Psoas muscle (tissue), 8 donors: ENCODE measurements at regions of chr10 and their contacts with region 1.

Region 1: GRCh38 chr10:80382989-80383388 is 25.4 kb upstream of the PRXL2A start:
- DNase-seq: peak in 1 of 2 donors; percentile 22
- ATAC-seq: peak in 1 of 4 donors; percentile 53
- H3K4me3 ChIP-seq: no peak overlapping the region
- H3K27ac ChIP-seq: no peak overlapping the region
- H3K4me1 ChIP-seq: no peaks in the 10 kb centered on the region
- H3K27me3 ChIP-seq: no peaks in the 10 kb centered on the region
- CTCF ChIP-seq: peak; percentile 70

Region 2: GRCh38 chr10:79984851-79985250 is 398.1 kb before region 1 on chr10:
- intact Hi-C with region 1: no loop called
- DNase-seq: no peak
- ATAC-seq: no peak
- H3K4me3 ChIP-seq: no peak overlapping the region
- H3K27ac ChIP-seq: no peak overlapping the region
- H3K4me1 ChIP-seq: peaks cover 7% of the 10 kb centered on the region
- H3K27me3 ChIP-seq: peaks cover 0 to 21% (median 2%) of the 10 kb centered on the region in 3 donors
- CTCF ChIP-seq: no peak

Region 3: DNA sequence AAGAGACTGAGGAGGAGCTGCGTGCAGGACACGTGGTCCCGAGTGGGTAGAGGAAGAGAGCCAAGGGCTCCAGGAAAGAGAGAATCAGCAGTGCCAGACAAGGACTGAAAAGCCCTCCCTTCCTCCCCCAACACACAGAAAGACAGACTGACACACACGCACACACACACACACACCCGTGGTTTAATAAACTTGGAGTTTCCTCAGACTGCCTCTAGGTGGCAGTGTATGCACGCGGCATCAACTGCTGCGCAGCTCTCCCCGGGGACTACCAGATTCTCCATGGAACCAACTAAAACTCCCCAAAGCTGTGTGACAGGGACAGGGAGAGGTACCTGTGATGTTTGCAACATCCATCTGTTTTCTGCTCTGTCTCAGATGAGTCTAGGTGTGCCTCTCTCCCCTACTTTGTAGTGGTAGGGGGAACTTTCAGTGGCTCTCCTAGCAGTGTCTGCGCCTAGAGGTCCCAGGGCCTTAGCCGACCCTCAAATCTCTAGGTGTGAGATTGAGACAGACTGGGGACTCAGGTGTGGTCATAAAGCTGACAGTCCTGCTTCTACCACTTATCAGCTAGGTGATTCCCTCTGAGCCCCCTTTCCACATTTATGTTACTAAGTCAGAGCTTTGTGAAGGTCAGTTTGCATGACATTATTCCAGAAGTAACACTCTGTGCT is 61.8 kb after region 1 on chr10:
- intact Hi-C with region 1: loop called (anchors 5 kb)
- DNase-seq: peak; percentile 67 to 77
- ATAC-seq: peak; percentile 90 to 98 (median 94)
- H3K4me3 ChIP-seq: no peak overlapping the region
- H3K27ac ChIP-seq: no peak overlapping the region
- H3K4me1 ChIP-seq: no peaks in the 10 kb centered on the region
- H3K27me3 ChIP-seq: no peaks in the 10 kb centered on the region
- CTCF ChIP-seq: peak; percentile 69

Region 4: GRCh38 chr10:80498833-80499741 is 116.1 kb after region 1 on chr10:
- intact Hi-C with region 1: loop called (anchors 2 to 10 kb)
- DNase-seq: peak; percentile 94 to 96
- ATAC-seq: peak; percentile 95 to 96 (median 96)
- H3K4me3 ChIP-seq: no peak overlapping the region
- H3K27ac ChIP-seq: peak overlapping the region; percentile 77
- H3K4me1 ChIP-seq: peaks cover 46% of the 10 kb centered on the region
- H3K27me3 ChIP-seq: no peaks in the 10 kb centered on the region
- CTCF ChIP-seq: no peak

Region 5: DNA sequence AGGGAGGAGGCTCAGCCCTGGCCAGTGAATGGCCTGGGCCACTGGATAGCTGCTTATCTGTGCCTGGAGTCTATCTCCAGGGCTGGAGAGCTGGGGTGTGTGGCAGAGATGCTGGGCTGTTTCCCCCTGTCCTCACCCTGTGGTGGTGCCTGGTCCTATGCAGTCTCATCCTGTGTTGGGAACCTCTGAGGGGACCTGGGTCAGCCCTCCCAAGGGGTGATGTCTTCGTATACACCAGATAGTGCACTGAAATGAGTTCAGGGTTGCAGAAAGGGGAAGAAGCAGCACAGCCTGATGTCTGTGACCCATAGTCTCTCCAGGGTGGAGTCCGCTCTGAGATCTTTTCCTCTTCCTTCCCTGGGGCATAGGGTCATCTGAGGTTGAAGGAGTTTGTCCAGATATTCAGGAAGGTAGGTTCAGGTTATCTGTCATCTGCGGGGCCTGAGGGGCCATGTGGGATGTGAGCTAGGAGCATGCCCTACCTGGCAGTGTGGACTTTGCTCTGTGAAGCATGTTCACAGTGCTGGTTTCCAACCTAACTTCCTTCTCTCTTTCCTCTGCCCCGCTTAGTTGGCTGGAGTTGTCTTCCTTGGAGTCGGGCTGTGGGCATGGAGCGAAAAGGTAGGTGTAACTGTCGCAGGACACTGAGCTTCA is 121.3 kb after region 1 on chr10:
- intact Hi-C with region 1: loop called (anchors 2 to 10 kb)
- DNase-seq: peak in 1 of 2 donors; percentile 39
- ATAC-seq: no peak
- H3K4me3 ChIP-seq: no peak overlapping the region
- H3K27ac ChIP-seq: peak overlapping the region; percentile 31
- H3K4me1 ChIP-seq: peaks cover 48% of the 10 kb centered on the region
- H3K27me3 ChIP-seq: no peaks in the 10 kb centered on the region
- CTCF ChIP-seq: no peak